ENCODE measurements at regions of chr7 and their contacts with region 1.

Region 1: GRCh38 chr7:35424869-35425495 is 171.1 kb upstream of the TBX20 start:
- H3K4me3 ChIP-seq: no peak overlapping the region
- H3K27ac ChIP-seq: no peak overlapping the region
- H3K4me1 ChIP-seq: no peaks in the 10 kb centered on the region
- CTCF ChIP-seq: peak; percentile 44

Region 2: GRCh38 chr7:35280902-35281301 is 144.1 kb before region 1 on chr7:
- CTCF ChIA-PET with region 1: no interaction called
- POLR2A ChIA-PET with region 1: no interaction called
- H3K4me3 ChIP-seq: no peak overlapping the region
- H3K27ac ChIP-seq: no peak overlapping the region
- H3K4me1 ChIP-seq: no peaks in the 10 kb centered on the region
- CTCF ChIP-seq: no peak

Region 3: DNA sequence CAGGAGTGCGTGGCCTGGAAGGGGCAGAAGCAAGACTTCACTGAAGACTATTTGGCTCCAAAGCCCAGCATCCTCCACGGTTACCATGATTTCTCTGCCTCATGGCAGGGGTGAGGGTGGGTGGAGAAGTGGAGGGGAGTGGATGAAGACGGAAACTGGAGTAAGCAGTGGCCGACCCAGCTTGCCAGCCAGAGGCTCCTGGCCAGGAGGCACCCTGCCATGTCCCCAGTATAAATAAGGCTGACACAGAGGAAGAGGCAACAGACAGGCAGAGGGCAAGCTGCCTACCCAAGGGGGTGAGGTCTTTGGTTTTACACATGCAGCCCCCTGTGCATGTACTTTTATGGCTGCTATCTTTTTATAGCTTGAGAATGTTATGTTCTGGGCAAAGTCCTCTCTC is 68.5 kb before region 1 on chr7:
- CTCF ChIA-PET with region 1: no interaction called
- POLR2A ChIA-PET with region 1: no interaction called
- H3K4me3 ChIP-seq: no peak overlapping the region
- H3K27ac ChIP-seq: no peak overlapping the region
- H3K4me1 ChIP-seq: no peaks in the 10 kb centered on the region
- CTCF ChIP-seq: no peak

Region 4: DNA sequence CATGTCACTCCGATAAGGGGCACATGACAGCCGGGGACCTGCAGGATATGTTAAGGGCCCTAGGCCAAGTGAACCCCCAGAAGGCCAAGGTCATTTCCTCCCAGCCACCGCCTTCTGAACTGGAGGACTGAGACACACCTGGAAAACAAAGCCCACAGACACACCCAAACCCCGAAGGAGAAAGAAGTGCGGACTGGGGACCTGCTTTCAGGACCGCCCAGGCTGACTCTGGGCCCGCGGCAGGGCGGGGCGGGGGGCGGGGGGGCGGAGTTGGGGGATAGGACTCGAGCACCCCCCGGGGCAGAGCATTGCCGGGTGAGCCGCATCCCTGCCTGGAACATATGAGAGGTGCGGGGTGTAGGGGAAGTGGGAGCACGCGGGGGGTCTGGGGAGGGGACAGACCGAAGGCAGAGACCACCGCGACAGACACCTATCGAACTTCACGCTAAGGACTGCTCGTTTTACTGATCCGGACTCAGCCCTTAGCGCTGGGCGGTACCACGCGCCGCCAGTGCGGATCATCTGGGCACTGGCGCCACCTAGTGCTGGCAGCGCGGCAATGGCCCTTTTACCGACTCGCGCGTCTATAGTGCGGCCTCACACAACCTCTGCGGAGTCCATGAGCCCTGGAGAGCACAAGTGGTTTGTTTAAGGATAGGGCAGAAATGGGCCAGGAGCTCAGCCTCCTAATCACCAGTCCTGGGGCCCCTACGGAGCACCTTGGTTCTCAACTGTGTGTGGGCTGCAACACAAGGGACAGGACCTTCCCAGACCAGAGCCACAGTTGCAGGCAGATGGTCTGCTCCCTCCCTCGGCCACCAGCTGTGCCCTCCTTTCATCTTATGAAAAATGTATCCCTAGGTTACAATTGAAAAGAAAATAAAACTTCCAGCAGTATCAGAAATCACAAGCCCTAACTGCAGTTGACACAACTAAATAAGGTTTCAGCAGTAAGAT is 112.4 kb after region 1 on chr7:
- CTCF ChIA-PET with region 1: interaction called, 14 read pairs
- POLR2A ChIA-PET with region 1: no interaction called
- H3K4me3 ChIP-seq: peak overlapping the region; percentile 43
- H3K27ac ChIP-seq: no peak overlapping the region
- H3K4me1 ChIP-seq: no peaks in the 10 kb centered on the region
- CTCF ChIP-seq: peak; percentile 87

Region 5: DNA sequence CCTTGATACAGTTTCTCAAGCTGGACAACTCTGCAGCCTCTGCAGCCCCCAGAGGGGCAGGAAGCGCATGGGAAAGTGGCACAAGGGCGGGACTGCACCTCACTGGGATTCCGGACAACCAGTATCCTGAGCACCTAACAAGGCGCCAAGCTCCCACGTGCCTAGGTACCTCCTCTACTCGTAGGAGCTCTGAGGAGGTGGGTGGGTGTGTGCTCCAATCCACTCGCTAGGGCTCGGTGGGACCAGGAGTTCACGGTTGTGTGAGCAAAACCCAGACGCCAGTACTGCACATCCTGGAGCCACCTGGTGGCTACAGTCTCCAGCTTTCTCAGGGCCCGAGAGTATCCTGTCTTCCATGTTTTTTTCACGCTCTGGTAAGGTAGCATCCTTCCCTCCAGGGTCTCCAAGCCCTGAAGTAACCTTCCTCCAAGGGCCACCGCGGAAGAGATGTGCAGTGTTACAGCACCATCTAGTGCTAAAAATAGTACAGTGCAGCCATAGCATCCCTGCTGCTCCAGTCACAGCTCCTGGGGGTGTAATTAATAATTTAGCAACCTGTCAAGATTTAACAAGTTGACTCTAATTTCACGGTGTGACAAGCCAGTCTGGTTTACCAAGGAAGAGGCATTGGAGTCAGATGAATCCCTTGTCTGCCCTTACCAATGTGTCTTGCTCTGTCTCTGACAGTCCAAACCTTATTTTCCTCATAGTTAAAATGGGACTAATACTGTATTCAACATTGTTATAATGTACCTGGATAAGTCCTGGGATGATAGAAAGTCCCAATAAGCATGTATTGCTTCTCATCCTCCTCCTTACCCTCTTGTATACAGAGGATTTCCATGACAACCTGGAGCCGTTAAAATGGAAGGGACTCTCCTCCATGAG is 199.6 kb after region 1 on chr7:
- CTCF ChIA-PET with region 1: interaction called, 13 read pairs
- POLR2A ChIA-PET with region 1: no interaction called
- H3K4me3 ChIP-seq: no peak overlapping the region
- H3K27ac ChIP-seq: no peak overlapping the region
- H3K4me1 ChIP-seq: 0 out of 2 replicates have a peak, but pooled peaks cover 7% of the 10 kb centered on the region
- CTCF ChIP-seq: peak; percentile 59